SK-MEL-5 (cell line): ENCODE measurements at regions of chr17 and their contacts with region 1.

Region 1: GRCh38 chr17:57849874-57850754 is at the start of gene MRPS23:
- DNase-seq: peak; percentile 99
- total RNA-seq, gene MRPS23: 87.3 and 95.4 TPM in 2 replicates

Region 2: DNA sequence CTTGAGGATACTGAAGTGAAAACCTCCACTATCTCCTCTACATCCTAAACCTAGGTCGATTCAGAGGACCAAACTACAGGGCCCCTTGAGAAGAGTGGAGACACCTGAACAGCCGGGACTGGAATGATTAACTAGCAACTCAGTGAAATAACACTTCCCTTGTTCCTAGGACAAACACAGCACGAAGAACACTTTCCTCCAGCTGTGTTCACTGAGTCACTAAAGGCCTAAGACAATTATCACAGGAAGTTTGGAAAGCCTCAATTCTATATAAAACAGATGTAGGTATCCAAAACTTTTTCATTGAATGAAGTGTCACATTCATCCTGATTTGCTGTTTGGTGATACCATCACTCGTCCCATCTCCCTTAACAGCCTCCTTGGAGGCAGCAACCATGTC is 120.6 kb after region 1 on chr17:
- in situ Hi-C with region 1: loop called (anchors 10 kb)
- DNase-seq: no peak